ENCODE measurements at regions of chr5 and their contacts with region 1.

Region 1: GRCh38 chr5:140420226-140420570 is 18.6 kb downstream of the ANKHD1 start:
- DNase-seq: no peak
- ATAC-seq: no peak
- H3K4me3 ChIP-seq: no peak overlapping the region
- H3K4me3 Mint-ChIP-seq: peak overlapping the region in 1 of 3 donors; percentile 36
- H3K27ac ChIP-seq: no peak overlapping the region
- H3K27ac Mint-ChIP-seq: peak overlapping the region in 1 of 2 donors; percentile 23
- H3K4me1 ChIP-seq: peaks cover 0 to 23% of the 10 kb centered on the region in 2 experiments
- H3K4me1 Mint-ChIP-seq: peaks cover 64 to 74% (median 73%) of the 10 kb centered on the region in 3 donors
- H3K27me3 ChIP-seq: no peaks in the 10 kb centered on the region
- H3K27me3 Mint-ChIP-seq: no peaks in the 10 kb centered on the region

Region 2: DNA sequence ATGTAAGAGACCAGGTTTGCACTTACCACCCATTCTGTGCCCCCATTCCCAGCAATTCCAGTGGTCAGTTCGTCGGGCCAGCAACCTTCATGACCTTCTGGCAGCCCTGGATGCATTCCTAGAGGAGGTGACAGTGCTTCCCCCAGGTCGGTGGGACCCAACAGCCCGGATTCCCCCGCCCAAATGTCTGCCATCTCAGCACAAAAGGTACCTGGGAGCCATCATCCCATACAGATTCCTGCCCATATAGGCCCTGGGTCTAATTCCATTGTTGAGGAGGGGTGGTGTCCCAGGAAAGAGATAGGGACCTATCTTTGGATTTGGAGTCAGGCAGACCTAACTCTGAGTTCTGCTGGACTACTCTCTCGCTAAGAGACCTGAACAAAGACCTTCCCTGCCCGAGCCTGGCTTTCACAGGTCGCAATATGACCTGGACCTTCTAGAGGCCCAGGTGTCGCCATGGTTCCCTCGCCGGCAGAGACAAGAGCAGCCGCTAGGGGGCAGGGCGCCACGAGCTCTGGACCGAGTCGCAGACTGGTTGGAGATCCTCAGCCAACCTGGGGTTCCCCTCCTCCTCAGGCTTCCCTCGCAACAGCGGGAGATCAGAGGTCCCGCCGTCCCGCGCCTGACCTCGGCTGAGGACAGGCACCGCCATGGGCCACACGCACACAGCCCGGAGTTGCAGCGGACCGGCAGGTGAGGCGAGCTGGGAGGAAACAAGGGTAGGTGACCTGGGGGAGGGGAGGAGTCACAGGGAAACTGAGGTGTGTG is 57.2 kb before region 1 on chr5:
- CTCF ChIA-PET with region 1: interaction called in 1 of 2 experiments, 14 read pairs
- POLR2A ChIA-PET with region 1: interaction called in 1 of 2 experiments, 3 read pairs
- DNase-seq: peak; percentile 45 to 87 (median 75)
- ATAC-seq: peak; percentile 89 to 98 (median 91)
- H3K4me3 ChIP-seq: peak overlapping the region; percentile 1 to 35
- H3K4me3 Mint-ChIP-seq: peak overlapping the region; percentile 63 to 68 (median 68)
- H3K27ac ChIP-seq: no peak overlapping the region
- H3K27ac Mint-ChIP-seq: no peak overlapping the region
- H3K4me1 ChIP-seq: peaks cover 0 to 9% of the 10 kb centered on the region in 2 experiments
- H3K4me1 Mint-ChIP-seq: peaks cover 4 to 7% (median 4%) of the 10 kb centered on the region in 3 donors
- H3K27me3 ChIP-seq: peaks cover 0 to 12% of the 10 kb centered on the region in 2 experiments
- H3K27me3 Mint-ChIP-seq: peaks cover 0 to 4% of the 10 kb centered on the region in 2 donors

Region 3: DNA sequence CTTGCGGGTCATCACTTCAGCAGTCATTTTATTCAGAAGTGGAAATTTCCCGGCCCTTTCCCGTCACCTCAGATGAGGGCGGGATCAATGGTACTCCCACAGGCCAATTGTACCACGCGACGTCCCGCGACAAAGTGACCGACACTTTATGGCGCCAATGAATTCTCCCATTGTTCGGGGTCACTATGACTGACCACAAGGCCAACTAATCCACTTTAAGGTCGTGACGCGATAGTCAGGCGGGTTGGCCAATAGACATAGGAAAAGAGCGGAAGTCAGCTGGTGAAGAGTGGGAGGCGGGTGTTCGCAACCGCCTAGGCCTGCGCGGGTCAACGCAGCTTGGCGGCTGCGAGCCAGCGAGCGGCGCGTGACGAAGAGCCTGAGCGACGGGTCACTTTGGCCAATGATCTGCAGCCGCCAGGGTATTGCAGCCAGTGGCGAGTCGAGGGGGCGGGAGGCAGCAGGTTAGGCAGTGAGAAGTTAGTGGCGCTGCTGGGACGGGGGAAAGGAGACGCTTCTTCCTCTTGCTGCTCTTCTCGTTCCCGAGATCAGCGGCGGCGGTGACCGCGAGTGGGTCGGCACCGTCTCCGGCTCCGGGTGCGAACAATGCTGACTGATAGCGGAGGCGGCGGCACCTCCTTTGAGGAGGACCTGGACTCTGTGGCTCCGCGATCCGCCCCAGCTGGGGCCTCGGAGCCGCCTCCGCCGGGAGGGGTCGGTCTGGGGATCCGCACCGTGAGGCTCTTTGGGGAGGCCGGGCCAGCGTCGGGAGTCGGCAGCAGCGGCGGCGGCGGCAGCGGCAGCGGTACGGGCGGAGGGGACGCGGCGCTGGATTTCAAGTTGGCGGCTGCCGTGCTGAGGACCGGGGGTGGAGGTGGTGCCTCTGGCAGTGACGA is 18.6 kb before region 1 on chr5 and contains the start of gene ANKHD1:
- CTCF ChIA-PET with region 1: no interaction called
- POLR2A ChIA-PET with region 1: no interaction called
- DNase-seq: peak; percentile 84 to 99 (median 97)
- ATAC-seq: peak; percentile 81 to 83 (median 82)
- H3K4me3 ChIP-seq: peak within 1 kb of the TSS; percentile 71 to 96
- H3K4me3 Mint-ChIP-seq: no peak within 1 kb of the TSS
- H3K27ac ChIP-seq: peak within 1 kb of the TSS; percentile 84
- H3K27ac Mint-ChIP-seq: peak within 1 kb of the TSS; percentile 80 to 92
- H3K4me1 ChIP-seq: peaks cover 15 to 41% of the 10 kb centered on the region in 2 experiments
- H3K4me1 Mint-ChIP-seq: peaks cover 35 to 42% (median 39%) of the 10 kb centered on the region in 3 donors
- H3K27me3 ChIP-seq: no peaks in the 10 kb centered on the region
- H3K27me3 Mint-ChIP-seq: no peaks in the 10 kb centered on the region
- total RNA-seq, gene ANKHD1: 184 to 220 (median 203) TPM

Region 4: GRCh38 chr5:140432916-140433315 is 12.7 kb after region 1 on chr5:
- CTCF ChIA-PET with region 1: interaction called, 9 to 10 read pairs
- POLR2A ChIA-PET with region 1: interaction called in 1 of 2 experiments, 7 read pairs
- DNase-seq: no peak
- ATAC-seq: no peak
- H3K4me3 ChIP-seq: no peak overlapping the region
- H3K4me3 Mint-ChIP-seq: no peak overlapping the region
- H3K27ac ChIP-seq: no peak overlapping the region
- H3K27ac Mint-ChIP-seq: peak overlapping the region; percentile 2 to 8
- H3K4me1 ChIP-seq: peaks cover 0 to 10% of the 10 kb centered on the region in 2 experiments
- H3K4me1 Mint-ChIP-seq: peaks cover 34 to 44% (median 42%) of the 10 kb centered on the region in 3 donors
- H3K27me3 ChIP-seq: no peaks in the 10 kb centered on the region
- H3K27me3 Mint-ChIP-seq: no peaks in the 10 kb centered on the region

Region 5: GRCh38 chr5:140547508-140548299 is 127.5 kb after region 1 on chr5 and contains the start of gene EIF4EBP3:
- CTCF ChIA-PET with region 1: interaction called in 1 of 2 experiments, 10 read pairs
- POLR2A ChIA-PET with region 1: no interaction called
- DNase-seq: peak; percentile 69 to 94 (median 88)
- ATAC-seq: peak; percentile 97 to 98 (median 98)
- H3K4me3 ChIP-seq: peak within 1 kb of the TSS; percentile 73 to 77
- H3K4me3 Mint-ChIP-seq: peak within 1 kb of the TSS; percentile 88 to 89 (median 89)
- H3K27ac ChIP-seq: peak within 1 kb of the TSS; percentile 77
- H3K27ac Mint-ChIP-seq: peak within 1 kb of the TSS; percentile 97 to 99
- H3K4me1 ChIP-seq: peaks cover 5 to 30% of the 10 kb centered on the region in 2 experiments
- H3K4me1 Mint-ChIP-seq: peaks cover 30 to 41% (median 32%) of the 10 kb centered on the region in 3 donors
- H3K27me3 ChIP-seq: no peaks in the 10 kb centered on the region
- H3K27me3 Mint-ChIP-seq: no peaks in the 10 kb centered on the region
- total RNA-seq, gene EIF4EBP3: 10.6 to 23.6 (median 20.4) TPM

Region 6: GRCh38 chr5:140753561-140753960 is 333.4 kb after region 1 on chr5:
- CTCF ChIA-PET with region 1: no interaction called
- POLR2A ChIA-PET with region 1: no interaction called
- DNase-seq: no peak
- ATAC-seq: no peak
- H3K4me3 ChIP-seq: no peak overlapping the region
- H3K4me3 Mint-ChIP-seq: no peak overlapping the region
- H3K27ac ChIP-seq: no peak overlapping the region
- H3K27ac Mint-ChIP-seq: no peak overlapping the region
- H3K4me1 ChIP-seq: no peaks in the 10 kb centered on the region
- H3K4me1 Mint-ChIP-seq: no peaks in the 10 kb centered on the region
- H3K27me3 ChIP-seq: peaks cover 0 to 12% of the 10 kb centered on the region in 2 experiments
- H3K27me3 Mint-ChIP-seq: peaks cover 6 to 22% of the 10 kb centered on the region in 2 donors

Region 7: DNA sequence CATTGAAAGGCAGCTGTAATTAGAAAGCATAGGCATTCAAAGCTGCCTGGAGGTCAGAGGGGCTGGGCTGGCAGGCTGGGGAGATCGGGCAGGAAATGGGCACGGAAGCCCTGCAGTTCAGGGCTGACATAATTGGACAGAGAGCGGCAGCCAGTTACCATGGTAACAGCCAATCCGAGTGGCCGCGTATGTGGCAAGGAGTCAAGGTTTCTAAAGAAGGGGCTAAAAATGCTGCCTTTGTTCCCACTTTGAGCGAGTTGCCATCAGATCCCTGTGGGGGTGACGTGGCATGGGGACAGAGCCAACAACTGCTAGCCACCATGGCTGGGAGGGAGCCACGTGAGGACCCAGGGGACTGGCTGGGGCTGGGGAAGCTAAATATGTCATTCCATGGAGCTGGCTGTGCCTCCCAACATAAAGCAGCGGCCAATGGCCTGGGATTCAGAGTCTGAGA is 1643.7 kb after region 1 on chr5:
- CTCF ChIA-PET with region 1: interaction called in 1 of 2 experiments, 10 read pairs
- POLR2A ChIA-PET with region 1: no interaction called
- DNase-seq: peak in 32 of 35 experiments; percentile 10 to 53 (median 22)
- ATAC-seq: peak; percentile 50 to 89 (median 82)
- H3K4me3 ChIP-seq: no peak overlapping the region
- H3K4me3 Mint-ChIP-seq: peak overlapping the region in 2 of 3 donors; percentile 13 to 72
- H3K27ac ChIP-seq: no peak overlapping the region
- H3K27ac Mint-ChIP-seq: peak overlapping the region; percentile 21 to 65
- H3K4me1 ChIP-seq: peaks cover 0 to 15% of the 10 kb centered on the region in 2 experiments
- H3K4me1 Mint-ChIP-seq: peaks cover 12 to 15% (median 15%) of the 10 kb centered on the region in 3 donors
- H3K27me3 ChIP-seq: peaks cover 0 to 4% of the 10 kb centered on the region in 2 experiments
- H3K27me3 Mint-ChIP-seq: no peaks in the 10 kb centered on the region